Activated CD4-positive, alpha-beta T cell treated with anti-CD3 and anti-CD28 coated beads, Interleukin-2, amount 10 ng/mL, durations not matched to agents 24 days and 14 days (primary cell): ENCODE measurements at regions of chr3 and their contacts with region 1.

Region 1: GRCh38 chr3:141530133-141530768 is 43.4 kb downstream of the RASA2 start:
- DNase-seq: no peak
- H3K4me3 Mint-ChIP-seq: peak overlapping the region; percentile 18
- H3K27ac Mint-ChIP-seq: peak overlapping the region; percentile 61
- H3K4me1 Mint-ChIP-seq: peaks cover 37% of the 10 kb centered on the region
- H3K27me3 Mint-ChIP-seq: no peaks in the 10 kb centered on the region

Region 2: DNA sequence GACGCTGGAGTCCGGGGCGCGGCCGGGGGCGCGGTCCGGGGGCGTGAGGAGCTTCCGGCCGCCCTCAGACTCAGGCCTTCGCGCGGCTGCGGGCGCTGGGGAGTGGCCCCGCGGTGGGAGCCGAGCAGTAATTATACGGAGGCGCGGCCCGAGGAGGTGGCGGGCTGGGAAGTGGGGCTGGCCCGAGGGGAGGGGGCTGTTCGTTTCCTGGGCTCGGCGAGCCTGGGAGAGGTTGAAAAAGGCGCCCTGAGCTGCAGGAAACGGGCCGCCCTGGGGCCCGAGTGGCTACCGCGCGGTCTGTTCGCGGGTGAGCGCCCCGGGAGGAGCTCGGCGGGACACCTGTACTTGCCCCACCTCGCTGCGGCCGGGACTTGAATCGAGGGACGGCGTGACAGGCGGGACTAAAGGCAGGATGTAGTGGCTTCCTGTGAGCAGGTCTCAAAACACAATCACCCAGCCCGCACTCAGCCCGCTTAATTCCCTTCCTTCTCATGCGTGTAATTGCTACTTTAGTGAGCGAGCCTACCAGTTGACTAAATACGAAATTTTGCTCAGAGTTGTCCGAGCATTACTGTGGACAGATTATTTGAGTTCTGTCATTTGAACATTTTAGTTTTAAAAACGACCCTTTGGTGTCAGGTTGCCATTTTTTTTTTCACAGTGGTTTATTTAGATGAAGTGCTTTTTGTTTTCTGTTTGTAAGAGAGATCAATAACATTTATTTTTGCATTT is 42.6 kb before region 1 on chr3:
- intact Hi-C with region 1: loop called (anchors 1 kb)
- DNase-seq: peak; percentile 96
- H3K4me3 Mint-ChIP-seq: peak overlapping the region; percentile 92
- H3K27ac Mint-ChIP-seq: peak overlapping the region; percentile 92
- H3K4me1 Mint-ChIP-seq: peaks cover 58% of the 10 kb centered on the region
- H3K27me3 Mint-ChIP-seq: peaks cover 2% of the 10 kb centered on the region

Region 3: DNA sequence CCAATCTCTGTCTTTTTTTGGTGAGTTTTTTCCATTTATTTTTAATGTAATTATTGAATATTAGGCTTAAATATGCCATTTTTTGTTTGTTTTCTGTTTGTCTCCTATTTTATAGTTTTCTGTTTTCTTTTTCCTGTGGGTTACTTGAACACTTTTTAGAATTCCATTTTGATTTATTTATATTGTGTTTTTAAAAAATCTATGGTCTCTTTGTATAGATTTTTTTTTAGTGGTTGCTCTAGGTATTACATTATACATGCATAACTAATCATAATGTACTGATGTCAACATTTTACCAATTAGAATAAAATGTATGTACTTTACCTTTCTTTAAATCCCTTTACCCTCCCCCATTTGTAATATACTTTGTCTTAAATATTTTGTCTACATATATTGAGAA is 12.7 kb after region 1 on chr3:
- intact Hi-C with region 1: loop called (anchors 1 kb)
- DNase-seq: no peak
- H3K4me3 Mint-ChIP-seq: no peak overlapping the region
- H3K27ac Mint-ChIP-seq: peak overlapping the region; percentile 54
- H3K4me1 Mint-ChIP-seq: peaks cover 31% of the 10 kb centered on the region
- H3K27me3 Mint-ChIP-seq: no peaks in the 10 kb centered on the region

Region 4: GRCh38 chr3:141553055-141553454 is 22.8 kb after region 1 on chr3:
- intact Hi-C with region 1: loop called (anchors 1 kb)
- DNase-seq: peak; percentile 81
- H3K4me3 Mint-ChIP-seq: peak overlapping the region; percentile 60
- H3K27ac Mint-ChIP-seq: peak overlapping the region; percentile 92
- H3K4me1 Mint-ChIP-seq: peaks cover 44% of the 10 kb centered on the region
- H3K27me3 Mint-ChIP-seq: no peaks in the 10 kb centered on the region

Region 5: DNA sequence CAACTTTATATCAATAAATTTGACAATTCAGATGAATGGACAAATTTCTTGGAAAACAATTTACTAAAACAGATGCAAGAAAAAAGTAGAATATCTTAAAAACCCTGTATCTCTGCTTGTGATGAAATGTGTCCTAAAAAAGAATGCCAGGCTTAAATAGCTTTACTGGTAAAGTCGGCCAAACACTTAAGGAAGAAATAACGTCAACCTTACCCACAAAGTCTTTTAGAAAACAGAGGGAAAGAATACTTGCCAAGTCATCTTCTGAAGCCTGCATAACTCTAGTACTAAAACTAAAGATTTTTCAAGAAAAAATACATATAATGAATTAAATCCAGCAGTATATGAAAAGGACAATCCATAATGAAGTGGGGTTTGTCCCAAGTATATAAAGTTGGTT is 67.7 kb after region 1 on chr3:
- intact Hi-C with region 1: no loop called
- DNase-seq: no peak
- H3K4me3 Mint-ChIP-seq: no peak overlapping the region
- H3K27ac Mint-ChIP-seq: no peak overlapping the region
- H3K4me1 Mint-ChIP-seq: no peaks in the 10 kb centered on the region
- H3K27me3 Mint-ChIP-seq: no peaks in the 10 kb centered on the region